GM13977 (cell line): ENCODE measurements at regions of chr13 and their contacts with region 1.

Region 1: DNA sequence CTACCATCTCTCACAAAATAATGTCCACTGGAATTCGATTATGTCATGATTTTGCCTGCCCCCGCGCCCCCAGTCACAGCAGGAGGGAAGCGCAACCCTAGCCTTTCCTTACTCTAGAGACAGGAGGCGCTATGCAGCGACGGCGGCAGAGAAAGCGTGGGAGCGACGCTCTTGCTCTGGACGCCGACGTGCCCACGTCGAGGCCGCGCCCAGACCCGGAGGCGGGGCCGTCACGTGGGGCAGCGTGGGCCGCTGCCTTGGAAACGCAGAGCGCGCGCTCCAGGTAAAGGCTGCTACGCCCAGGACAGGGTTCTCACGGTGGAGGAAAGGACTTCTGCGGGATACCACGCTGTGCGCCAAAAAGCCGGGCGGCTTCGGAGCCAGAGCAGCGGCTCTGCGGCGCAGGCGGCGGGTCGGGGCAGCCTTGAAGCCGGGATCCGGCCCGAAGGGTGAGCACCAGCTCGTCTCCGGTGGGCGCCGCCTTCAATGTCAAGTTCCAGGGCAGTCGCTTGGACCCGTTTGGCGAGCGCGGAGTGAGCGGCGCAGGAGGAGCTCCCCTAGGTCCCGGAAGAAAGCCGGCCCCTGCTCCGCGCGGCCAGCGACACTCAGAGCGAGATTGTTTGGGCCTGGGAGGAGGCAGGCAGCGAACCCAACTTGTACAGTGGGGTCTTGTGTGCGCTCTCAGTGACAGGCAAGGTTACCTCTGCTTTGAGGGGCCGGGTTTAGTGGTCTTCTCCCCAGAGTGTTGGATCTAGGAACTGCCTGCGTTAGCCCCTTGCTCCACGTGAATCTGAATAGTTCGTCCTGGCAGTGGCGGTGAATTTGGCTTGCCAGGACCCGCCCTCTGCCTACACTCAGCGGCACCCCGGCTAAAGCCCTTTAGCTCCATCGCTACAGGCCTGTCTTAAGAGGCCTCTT is 121.7 kb downstream of the MRPL57 start:
- DNase-seq: peak; percentile 94
- CTCF ChIP-seq: peak; percentile 98

Region 2: DNA sequence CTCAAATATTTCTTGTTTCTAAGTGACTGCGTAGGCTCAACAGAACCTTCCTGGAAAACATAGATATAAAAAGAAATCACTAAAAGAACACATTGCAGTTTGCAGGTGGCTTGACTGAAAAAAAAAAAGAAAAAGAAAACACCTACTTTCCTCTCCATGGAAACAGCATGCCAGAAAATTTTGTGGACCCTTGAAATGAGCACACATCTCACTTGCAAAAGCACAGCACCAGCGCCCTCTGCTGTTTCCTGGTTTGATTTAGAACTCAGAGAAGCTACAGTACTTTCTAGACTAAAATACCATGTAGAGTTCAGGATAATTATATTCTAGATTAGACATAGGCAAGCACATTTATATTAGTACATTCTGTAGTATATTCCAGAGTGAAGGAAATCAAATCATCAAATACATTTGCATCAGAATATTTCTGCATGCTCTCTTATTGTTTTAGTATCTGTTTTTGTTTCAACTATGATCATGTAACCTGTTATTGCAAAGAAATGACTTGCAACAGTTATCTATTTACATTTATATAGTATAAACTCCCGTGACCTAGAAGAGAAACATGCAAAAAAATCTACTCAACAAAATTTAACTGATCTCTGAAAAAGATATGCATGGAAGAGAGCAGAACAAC is 373.3 kb before region 1 on chr13:
- in situ Hi-C with region 1: loop called (anchors 25 kb)
- DNase-seq: peak; percentile 56
- CTCF ChIP-seq: peak; percentile 81

Region 3: GRCh38 chr13:21095311-21095710 is 202.9 kb before region 1 on chr13:
- in situ Hi-C with region 1: no loop called
- DNase-seq: no peak
- CTCF ChIP-seq: no peak